Activated naive CD4-positive, alpha-beta T cell treated with anti-CD3 and anti-CD28 coated beads for 36 hours (primary cell): ENCODE measurements at regions of chr19 and their contacts with region 1.

Region 1: GRCh38 chr19:11558881-11559828 is at the start of gene ELOF1:
- DNase-seq: peak; percentile 98
- H3K4me3 Mint-ChIP-seq: peak within 1 kb of the TSS; percentile 91
- H3K27ac Mint-ChIP-seq: peak within 1 kb of the TSS; percentile 89
- H3K4me1 Mint-ChIP-seq: peaks cover 43% of the 10 kb centered on the region
- H3K27me3 Mint-ChIP-seq: no peaks in the 10 kb centered on the region
- total RNA-seq, gene ELOF1: 33.0 to 33.4 TPM

Region 2: DNA sequence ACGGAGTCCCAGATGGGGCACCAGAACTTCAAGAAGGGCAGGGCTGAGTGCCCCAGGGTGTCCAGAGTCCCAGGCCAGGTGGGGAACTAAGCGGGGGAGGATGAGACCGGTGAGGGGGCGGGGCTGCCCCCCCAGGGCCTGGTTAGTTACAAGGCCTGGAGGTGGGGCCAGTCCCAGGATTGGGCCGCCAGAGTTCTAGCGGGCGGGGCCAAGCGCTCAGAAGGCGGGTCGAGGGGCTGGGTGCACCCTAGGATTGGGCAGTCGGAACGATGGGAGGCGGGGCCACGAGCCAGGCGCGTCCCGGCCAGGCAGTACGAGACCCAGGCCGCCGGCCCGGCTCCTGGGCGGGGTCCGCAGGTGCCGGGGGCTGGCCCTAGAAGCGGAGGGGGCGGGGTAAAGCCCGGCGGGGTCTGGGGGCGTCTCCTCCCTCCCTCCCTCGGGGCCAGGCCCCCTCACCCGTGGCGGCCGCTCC is 54.1 kb before region 1 on chr19:
- CTCF ChIA-PET with region 1: no interaction called
- intact Hi-C with region 1: loop called (anchors 1 kb)
- DNase-seq: peak; percentile 95
- H3K4me3 Mint-ChIP-seq: peak overlapping the region; percentile 86
- H3K27ac Mint-ChIP-seq: peak overlapping the region; percentile 36
- H3K4me1 Mint-ChIP-seq: peaks cover 15% of the 10 kb centered on the region
- H3K27me3 Mint-ChIP-seq: no peaks in the 10 kb centered on the region

Region 3: DNA sequence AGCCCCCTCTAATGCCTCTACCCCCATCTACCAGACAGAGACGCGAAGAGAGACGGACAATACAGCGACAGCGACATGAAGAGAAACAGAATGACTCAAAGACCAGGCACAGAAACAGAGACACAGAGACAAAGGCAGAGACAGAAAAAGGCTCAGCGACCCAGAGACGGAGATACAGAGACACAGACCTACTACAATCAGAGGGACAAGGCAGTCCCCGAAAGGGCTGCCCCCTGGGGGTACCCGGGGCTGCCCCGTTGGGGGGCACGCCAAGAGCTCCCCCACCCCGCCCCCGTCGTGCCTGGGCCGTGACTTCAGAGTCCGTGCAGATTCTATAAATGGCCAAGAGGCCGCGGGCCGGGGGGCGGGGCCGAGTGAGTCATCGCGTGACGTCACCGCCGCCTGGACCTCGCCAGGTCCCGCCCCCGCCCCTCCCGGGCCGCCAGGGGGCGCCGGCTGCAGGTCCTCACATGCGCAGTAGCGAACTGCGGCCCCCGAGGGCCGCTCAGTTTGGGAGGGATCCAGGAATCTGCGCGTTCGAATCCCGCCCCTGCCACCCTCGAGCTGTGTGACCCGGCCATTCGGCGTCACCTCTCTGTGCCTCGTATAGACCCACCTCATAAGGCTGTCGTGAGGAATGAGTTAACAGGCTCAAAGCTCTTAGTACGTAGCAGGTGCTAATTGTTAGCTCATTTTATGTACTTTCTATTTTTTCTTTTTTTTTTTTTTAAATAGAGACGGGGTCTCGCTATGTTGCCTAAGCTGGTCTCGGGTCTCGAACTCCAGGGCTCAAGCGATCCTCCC is 23.2 kb before region 1 on chr19:
- CTCF ChIA-PET with region 1: interaction called, 5 read pairs
- intact Hi-C with region 1: loop called (anchors 1 kb)
- DNase-seq: peak; percentile 87
- H3K4me3 Mint-ChIP-seq: no peak overlapping the region
- H3K27ac Mint-ChIP-seq: no peak overlapping the region
- H3K4me1 Mint-ChIP-seq: peaks cover 19% of the 10 kb centered on the region
- H3K27me3 Mint-ChIP-seq: peaks cover 16% of the 10 kb centered on the region

Region 4: GRCh38 chr19:11587302-11587974 is 28.3 kb after region 1 on chr19:
- CTCF ChIA-PET with region 1: interaction called, 60 read pairs
- intact Hi-C with region 1: loop called (anchors 1 kb)
- DNase-seq: peak; percentile 90
- H3K4me3 Mint-ChIP-seq: no peak overlapping the region
- H3K27ac Mint-ChIP-seq: no peak overlapping the region
- H3K4me1 Mint-ChIP-seq: peaks cover 5% of the 10 kb centered on the region
- H3K27me3 Mint-ChIP-seq: no peaks in the 10 kb centered on the region